Activated CD8-positive, alpha-beta T cell treated with anti-CD3 and anti-CD28 coated beads for 36 hours (primary cell): ENCODE measurements at regions of chr11 and their contacts with region 1.

Region 1: DNA sequence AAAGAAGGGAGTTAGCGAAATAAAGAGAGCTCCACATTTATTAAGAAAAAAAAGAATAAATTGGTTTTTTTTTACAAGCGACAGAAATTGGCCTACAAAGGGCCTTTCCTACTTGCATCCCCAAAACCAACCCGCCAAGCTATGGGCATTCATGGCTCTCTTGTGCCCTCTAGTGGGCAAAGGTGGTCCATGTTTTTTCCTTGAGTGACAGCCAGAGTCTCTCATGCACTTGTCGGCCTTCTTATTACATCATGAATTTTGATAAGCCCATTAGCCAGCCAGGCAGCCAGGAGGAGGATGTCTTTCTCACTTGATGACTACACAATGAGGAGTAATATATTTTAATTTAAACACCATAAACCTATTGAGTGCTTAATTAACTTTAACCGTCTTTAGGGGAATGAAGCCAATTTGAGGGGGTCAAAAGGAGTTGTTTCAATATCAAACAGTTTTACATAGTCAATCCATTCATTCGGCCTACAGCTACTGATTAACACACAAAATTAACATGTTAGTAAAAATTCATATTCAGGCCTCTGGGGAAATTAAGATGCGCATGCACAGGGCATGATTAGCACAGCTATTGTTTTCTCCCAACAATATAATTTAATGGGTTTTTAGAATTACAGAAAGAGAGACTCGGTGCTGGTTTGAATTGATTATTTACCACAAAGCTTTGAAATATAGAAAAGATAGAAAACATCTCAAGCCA is 85.5 kb downstream of the RCN1 start:
- DNase-seq: peak; percentile 89
- ATAC-seq: peak; percentile 90
- H3K4me3 Mint-ChIP-seq: no peak overlapping the region
- H3K27ac Mint-ChIP-seq: no peak overlapping the region
- H3K4me1 Mint-ChIP-seq: peaks cover 3% of the 10 kb centered on the region
- H3K27me3 Mint-ChIP-seq: no peaks in the 10 kb centered on the region
- CTCF ChIP-seq: peak; percentile 88

Region 2: DNA sequence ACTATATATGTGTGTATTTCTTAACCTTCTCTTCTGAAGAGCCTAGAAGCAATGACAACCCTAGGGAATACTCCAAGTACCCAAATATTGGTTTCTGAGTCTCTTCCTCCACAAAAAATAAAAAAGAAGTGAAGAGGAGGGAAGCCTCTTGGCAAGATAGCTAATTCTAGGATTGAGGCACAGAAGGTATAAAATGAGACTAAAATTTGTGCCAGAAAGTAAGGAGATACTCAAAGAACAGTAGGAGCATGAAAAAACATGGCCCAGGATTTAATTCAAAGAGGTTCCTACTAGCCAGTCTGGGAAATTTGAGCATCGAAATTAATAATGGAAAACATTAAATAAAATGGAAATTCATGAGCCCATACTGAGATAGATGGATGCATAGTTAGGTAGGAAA is 477.3 kb before region 1 on chr11:
- CTCF ChIA-PET with region 1: no interaction called
- POLR2A ChIA-PET with region 1: no interaction called
- intact Hi-C with region 1: no loop called
- DNase-seq: no peak
- ATAC-seq: no peak
- H3K4me3 Mint-ChIP-seq: no peak overlapping the region
- H3K27ac Mint-ChIP-seq: no peak overlapping the region
- H3K4me1 Mint-ChIP-seq: peaks cover 8% of the 10 kb centered on the region
- H3K27me3 Mint-ChIP-seq: no peaks in the 10 kb centered on the region
- CTCF ChIP-seq: no peak

Region 3: GRCh38 chr11:32162351-32162750 is 14.0 kb before region 1 on chr11:
- CTCF ChIA-PET with region 1: interaction called, 29 read pairs
- POLR2A ChIA-PET with region 1: no interaction called
- intact Hi-C with region 1: no loop called
- DNase-seq: no peak
- ATAC-seq: no peak
- H3K4me3 Mint-ChIP-seq: no peak overlapping the region
- H3K27ac Mint-ChIP-seq: no peak overlapping the region
- H3K4me1 Mint-ChIP-seq: no peaks in the 10 kb centered on the region
- H3K27me3 Mint-ChIP-seq: no peaks in the 10 kb centered on the region
- CTCF ChIP-seq: no peak

Region 4: DNA sequence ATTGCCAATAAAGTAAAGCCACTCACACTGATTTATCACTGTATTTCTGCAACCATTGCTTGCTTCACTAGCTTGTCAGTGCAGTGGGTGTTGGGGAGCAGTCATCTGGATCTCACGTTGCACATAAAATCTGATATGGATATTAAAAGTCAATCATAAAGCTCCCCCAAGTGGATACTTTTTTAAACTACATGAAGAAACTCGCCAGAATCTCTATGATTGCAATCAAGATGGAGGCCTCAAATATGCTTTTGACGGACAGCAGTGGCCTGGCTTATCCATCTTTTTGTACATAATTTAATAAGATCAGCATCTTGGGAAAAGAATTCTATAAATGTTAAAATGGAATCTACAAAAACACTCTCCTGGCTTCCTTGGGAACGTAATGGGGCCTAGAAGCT is 121.2 kb after region 1 on chr11:
- CTCF ChIA-PET with region 1: interaction called, 10 read pairs
- POLR2A ChIA-PET with region 1: no interaction called
- intact Hi-C with region 1: no loop called
- DNase-seq: no peak
- ATAC-seq: peak; percentile 51
- H3K4me3 Mint-ChIP-seq: no peak overlapping the region
- H3K27ac Mint-ChIP-seq: no peak overlapping the region
- H3K4me1 Mint-ChIP-seq: no peaks in the 10 kb centered on the region
- H3K27me3 Mint-ChIP-seq: peaks cover 2% of the 10 kb centered on the region
- CTCF ChIP-seq: peak; percentile 44

Region 5: GRCh38 chr11:32326522-32326921 is 150.1 kb after region 1 on chr11:
- CTCF ChIA-PET with region 1: no interaction called
- POLR2A ChIA-PET with region 1: no interaction called
- intact Hi-C with region 1: no loop called
- DNase-seq: no peak
- ATAC-seq: no peak
- H3K4me3 Mint-ChIP-seq: no peak overlapping the region
- H3K27ac Mint-ChIP-seq: no peak overlapping the region
- H3K4me1 Mint-ChIP-seq: no peaks in the 10 kb centered on the region
- H3K27me3 Mint-ChIP-seq: peaks cover 12% of the 10 kb centered on the region
- CTCF ChIP-seq: no peak